Ascending aorta (tissue), 2 donors: ENCODE measurements at regions of chr2 and their contacts with region 1.

Region 1: DNA sequence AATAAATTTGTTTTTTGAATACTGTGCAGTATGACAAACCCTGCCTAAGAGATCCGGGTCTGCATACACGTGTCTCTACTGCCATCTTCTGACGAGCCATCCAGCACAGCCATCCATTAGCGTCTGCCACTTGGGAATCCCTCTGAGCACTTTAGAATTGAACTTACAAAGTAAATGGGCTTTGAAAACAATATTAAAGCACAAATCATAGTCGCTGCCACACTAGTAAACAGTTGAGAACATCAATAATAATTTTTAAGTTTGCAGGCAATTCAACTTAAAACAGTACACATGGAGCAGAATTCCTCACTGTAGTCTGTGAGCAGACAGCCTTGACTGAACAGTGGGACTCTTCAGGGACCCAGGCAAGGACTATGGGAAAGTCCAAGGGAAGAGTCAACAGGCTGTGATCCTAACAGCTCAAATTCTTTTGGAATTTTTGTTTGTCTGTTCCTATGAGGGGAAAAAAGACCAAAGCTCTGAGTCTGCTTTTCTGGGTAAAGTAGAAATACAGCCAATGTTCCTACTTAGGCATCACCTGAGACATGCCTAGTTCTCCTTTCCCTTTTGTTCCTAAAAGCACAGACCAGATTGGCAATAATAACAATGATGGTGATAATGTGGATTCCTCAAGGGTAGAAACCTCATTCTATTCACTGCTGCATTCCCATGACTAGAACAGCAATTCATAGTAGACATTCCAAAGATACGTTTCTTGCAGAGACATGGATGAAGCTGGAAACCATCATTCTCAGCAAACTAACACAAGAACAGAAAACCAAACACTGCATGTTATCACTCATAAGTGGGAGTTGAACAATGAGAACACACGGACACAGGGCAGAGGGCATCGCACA is 92.9 kb downstream of the MREG start:
- DNase-seq: peak in 1 of 2 donors; percentile 78
- H3K4me3 ChIP-seq: no peak overlapping the region
- H3K27ac ChIP-seq: no peak overlapping the region
- H3K4me1 ChIP-seq: peaks cover 5 to 16% of the 10 kb centered on the region in 2 donors
- H3K27me3 ChIP-seq: no peaks in the 10 kb centered on the region
- CTCF ChIP-seq: peak; percentile 81 to 85 (median 83)

Region 2: GRCh38 chr2:215454519-215455246 is 465.8 kb before region 1 on chr2:
- intact Hi-C with region 1: loop called (anchors 2 kb)
- DNase-seq: no peak
- H3K4me3 ChIP-seq: no peak overlapping the region
- H3K27ac ChIP-seq: no peak overlapping the region
- H3K4me1 ChIP-seq: peaks cover 4 to 5% of the 10 kb centered on the region in 2 donors
- H3K27me3 ChIP-seq: no peaks in the 10 kb centered on the region
- CTCF ChIP-seq: peak; percentile 65 to 81 (median 80)

Region 3: GRCh38 chr2:215751200-215751910 is 169.1 kb before region 1 on chr2:
- intact Hi-C with region 1: loop called (anchors 10 kb)
- DNase-seq: no peak
- H3K4me3 ChIP-seq: no peak overlapping the region
- H3K27ac ChIP-seq: no peak overlapping the region
- H3K4me1 ChIP-seq: peaks cover 5 to 40% of the 10 kb centered on the region in 2 donors
- H3K27me3 ChIP-seq: no peaks in the 10 kb centered on the region
- CTCF ChIP-seq: no peak

Region 4: DNA sequence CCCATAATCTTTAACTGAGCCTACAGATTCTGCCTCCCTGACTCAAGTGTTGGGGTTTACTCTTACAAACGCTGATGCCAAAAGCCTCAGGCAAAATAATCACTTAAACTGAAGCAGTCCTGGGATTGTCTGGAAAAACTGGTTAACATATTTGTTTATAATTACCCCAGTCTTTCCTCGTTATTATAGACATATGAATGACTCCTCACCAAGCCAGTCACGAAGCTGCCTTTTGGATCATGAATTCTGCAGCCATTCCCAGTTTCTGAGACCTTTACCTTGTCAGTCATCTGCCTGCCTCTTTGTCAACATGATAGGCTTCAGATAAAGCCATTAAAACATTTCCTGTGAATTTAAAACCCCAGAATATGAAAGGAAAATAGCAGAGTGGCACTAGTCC is 46.5 kb after region 1 on chr2:
- intact Hi-C with region 1: no loop called
- DNase-seq: no peak
- H3K4me3 ChIP-seq: no peak overlapping the region
- H3K27ac ChIP-seq: no peak overlapping the region
- H3K4me1 ChIP-seq: no peaks in the 10 kb centered on the region
- H3K27me3 ChIP-seq: no peaks in the 10 kb centered on the region
- CTCF ChIP-seq: no peak